Right ventricle myocardium inferior (tissue), 1 donor: ENCODE measurements at regions of chr2 and their contacts with region 1.

Region 1: GRCh38 chr2:3558205-3559014 is at the start of gene RNASEH1:
- DNase-seq: peak; percentile 99
- ATAC-seq: peak; percentile 100
- total RNA-seq, gene RNASEH1: 20.9 TPM

Region 2: GRCh38 chr2:3379647-3380534 is 178.5 kb before region 1 on chr2 and contains the start of gene TRAPPC12:
- intact Hi-C with region 1: loop called (anchors 1 kb)
- DNase-seq: peak; percentile 96
- ATAC-seq: peak; percentile 93
- total RNA-seq, gene TRAPPC12: 110 TPM

Region 3: GRCh38 chr2:3493615-3494007 is 64.8 kb before region 1 on chr2:
- intact Hi-C with region 1: no loop called
- DNase-seq: no peak
- ATAC-seq: peak; percentile 79

Region 4: GRCh38 chr2:3575534-3576262 is 17.3 kb after region 1 on chr2:
- intact Hi-C with region 1: loop called (anchors 1 kb)
- DNase-seq: no peak
- ATAC-seq: peak; percentile 18